ENCODE measurements at regions of chr11 and their contacts with region 1.

Region 1: GRCh38 chr11:110429731-110430266 is at the start of gene FDX1:
- DNase-seq: no peak
- H3K4me3 ChIP-seq: peak within 1 kb of the TSS; percentile 89
- CTCF ChIP-seq: peak; percentile 63

Region 2: GRCh38 chr11:110415081-110415480 is 14.7 kb before region 1 on chr11:
- CTCF ChIA-PET with region 1: interaction called, 13 read pairs
- POLR2A ChIA-PET with region 1: no interaction called
- DNase-seq: no peak
- H3K4me3 ChIP-seq: no peak overlapping the region
- CTCF ChIP-seq: no peak

Region 3: DNA sequence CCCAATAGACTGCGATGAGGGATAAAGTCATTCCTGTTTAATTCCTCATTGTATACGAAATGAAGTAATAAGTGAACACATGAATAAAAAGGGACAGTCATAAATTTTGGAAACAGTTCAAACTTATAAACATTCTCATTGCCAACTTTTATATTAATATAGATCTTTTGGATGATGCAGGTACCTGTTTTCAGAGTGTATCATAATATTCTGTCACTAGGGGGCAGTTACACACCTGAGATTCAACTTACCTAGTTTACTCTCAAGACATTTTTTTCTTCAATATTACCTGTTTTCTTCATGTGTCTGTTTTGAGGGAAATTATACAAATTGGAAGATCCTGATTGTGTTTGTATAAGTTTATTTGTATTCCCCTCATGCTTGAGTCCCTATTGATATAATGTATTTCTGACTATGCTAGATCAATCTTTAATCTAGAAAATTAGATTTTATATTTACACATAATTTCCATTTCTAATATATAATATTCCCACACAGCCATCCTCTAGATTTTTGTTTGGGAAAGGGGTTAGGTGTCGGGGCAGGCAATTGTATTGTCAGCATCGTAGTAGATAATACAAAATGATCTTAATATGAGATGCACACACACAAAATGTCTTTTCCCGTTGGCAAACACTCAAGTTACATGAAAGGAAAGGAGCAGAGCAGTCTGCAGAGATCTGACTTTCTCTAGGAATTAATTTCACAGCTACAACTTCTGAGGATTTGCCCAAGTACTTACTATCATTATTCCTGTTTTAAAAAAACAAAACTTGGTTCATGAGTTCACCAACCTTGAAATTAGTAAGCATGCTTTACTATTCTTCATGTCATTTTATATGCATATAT is 18.3 kb after region 1 on chr11:
- CTCF ChIA-PET with region 1: interaction called, 20 read pairs
- POLR2A ChIA-PET with region 1: no interaction called
- DNase-seq: no peak
- H3K4me3 ChIP-seq: no peak overlapping the region
- CTCF ChIP-seq: no peak